Motor neuron (in vitro differentiated cells): ENCODE measurements at regions of chr9 and their contacts with region 1.

Region 1: DNA sequence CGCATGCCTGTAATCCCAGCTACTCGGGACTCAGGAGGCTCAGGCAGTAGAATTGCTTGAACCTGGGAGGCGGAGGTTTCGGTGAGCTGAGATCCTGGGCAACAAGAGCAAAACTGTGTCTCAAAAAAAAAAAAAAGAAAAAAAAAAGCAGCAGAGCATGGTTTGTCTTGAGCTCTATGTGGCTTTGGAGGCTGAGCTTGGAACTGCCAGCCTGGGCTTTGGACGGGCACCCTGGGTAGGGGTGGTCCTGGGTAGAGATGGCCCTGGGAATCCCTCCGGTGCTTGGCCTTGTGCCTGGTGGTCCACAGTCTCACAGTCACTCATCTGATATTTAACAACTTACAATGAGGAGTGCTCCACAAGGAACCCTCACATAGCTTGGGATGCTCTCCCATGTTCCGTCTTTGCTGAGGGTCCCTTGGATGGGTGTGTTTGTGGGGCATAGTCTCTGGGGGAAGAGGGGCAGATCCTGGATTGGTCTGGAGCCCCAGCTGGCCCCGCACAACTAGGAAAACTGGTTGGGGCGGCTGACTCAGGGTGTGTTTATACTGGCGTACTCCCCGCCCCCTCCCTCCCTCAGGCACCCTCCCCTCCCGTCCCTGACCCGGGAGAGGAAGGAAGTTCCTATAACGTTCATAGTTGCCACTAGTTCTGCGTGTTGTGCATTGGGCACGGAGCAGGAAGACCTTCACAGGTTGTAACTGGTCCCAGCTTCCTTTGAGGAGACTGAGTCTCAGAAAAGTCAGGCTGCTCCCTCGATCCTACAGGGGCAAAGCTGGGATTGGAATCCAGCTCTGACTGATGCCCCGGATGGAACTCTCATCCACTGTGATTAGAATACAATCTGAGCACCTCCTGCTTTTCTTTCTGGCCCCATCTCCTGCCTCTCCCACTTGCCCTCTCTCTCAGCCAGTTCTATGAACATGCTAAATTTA is 11.2 kb downstream of the IER5L start:
- ATAC-seq: peak; percentile 25 to 79 (median 56)
- H3K4me3 ChIP-seq: no peak overlapping the region
- H3K27ac ChIP-seq: no peak overlapping the region
- H3K4me1 ChIP-seq: peaks cover 6 to 15% of the 10 kb centered on the region in 2 donors

Region 2: DNA sequence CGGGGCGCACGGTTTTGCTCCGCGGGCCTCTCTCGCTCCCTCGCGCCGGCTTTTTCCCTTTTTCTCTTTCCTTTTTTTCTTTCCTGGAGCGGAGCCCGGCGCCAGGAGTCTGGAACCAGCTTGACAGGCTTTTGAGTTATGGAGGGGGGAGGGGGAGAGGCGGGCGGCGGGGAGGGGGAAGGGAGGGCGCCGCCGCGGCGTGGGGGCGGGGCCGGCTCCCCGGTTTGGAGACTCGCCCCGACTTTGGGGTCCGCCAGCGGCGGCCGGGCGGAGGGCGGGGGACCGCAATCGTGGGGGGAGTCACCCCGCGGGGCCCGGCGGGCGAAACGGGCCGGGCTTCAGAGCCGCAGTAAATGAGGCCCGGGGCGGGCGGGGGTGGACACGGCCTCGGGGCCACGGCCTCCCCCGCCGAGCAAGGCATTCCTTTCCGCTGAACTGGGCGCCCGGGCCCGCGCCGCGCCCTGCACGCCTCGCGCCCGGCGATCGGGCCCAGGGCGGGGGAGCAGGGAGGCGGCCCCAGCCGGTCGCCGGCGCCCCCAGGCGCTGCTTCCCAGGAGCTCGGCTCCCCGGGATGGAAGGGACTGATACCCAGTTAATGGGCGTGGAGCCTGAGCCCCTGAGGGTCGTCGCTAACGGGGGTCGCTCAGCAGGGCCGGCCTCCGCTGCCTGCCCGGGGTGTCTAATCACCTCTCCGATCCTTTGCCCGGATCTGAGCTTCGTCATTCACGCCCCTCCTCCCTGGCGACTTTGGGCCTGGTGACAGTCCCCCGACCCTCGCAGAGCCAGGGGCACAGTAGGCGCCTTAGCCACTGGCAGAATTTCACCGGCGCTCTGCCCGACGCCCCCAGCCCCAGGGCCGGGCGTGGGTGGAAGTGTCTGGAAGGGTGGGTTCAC is 315.9 kb after region 1 on chr9:
- in situ Hi-C with region 1: loop called in 1 of 9 experiments (anchors 10 kb)
- ATAC-seq: peak; percentile 73 to 83 (median 78)
- H3K4me3 ChIP-seq: peak overlapping the region; percentile 11 to 33 (median 21)
- H3K27ac ChIP-seq: peak overlapping the region; percentile 90 to 96
- H3K4me1 ChIP-seq: peaks cover 62 to 74% of the 10 kb centered on the region in 2 donors